K562 (cell line): ENCODE measurements at regions of chr1 and their contacts with region 1.

Region 1: GRCh38 chr1:156833603-156834002 is 17.0 kb upstream of the SH2D2A start:
- DNase-seq: no peak
- ATAC-seq: no peak
- H3K4me3 ChIP-seq: no peak overlapping the region
- H3K27ac ChIP-seq: no peak overlapping the region
- H3K4me1 ChIP-seq: peaks cover 0 to 7% of the 10 kb centered on the region in 2 experiments; a peak in 3 of 5 replicates
- H3K27me3 ChIP-seq: peaks cover 17 to 22% of the 10 kb centered on the region in 2 experiments; a peak in 4 of 5 replicates
- CTCF ChIP-seq: no peak
- EP300 ChIP-seq: no peak
- POLR2A ChIP-seq: no peak
- RAD21 ChIP-seq: no peak

Region 2: DNA sequence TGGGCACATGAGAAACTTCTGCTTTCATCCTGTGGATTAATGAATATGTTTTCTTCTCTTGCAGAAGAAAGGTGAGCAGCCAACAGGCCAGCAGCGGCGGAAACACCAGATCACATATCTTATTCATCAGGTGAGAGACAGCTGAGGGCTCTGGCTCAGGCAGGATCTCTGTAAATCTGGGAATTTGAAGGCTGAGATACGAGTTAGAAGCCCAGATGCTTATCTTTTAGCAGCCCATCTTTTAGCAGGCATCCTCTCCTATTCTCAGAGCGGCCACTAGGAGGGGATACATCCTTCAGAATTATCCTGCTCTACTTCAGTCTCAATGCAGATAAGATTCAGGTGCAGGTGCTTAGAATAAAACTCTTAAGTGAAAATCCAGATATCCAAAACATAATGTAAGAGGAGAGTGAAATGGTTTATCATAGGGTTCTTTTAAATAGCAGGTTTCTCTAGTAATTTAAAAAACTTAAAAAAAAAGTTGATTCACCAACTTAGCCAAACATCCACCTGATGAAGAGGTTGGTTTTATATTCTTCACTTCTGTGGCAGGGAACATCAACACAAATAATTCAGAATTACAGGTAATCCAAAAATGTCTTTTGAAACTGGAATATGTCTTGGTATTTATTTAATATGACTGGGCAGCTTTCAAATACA is 36.3 kb before region 1 on chr1:
- CTCF ChIA-PET with region 1: interaction called, 4 read pairs
- POLR2A ChIA-PET with region 1: no interaction called
- in situ Hi-C with region 1: no loop called
- intact Hi-C with region 1: loop called (anchors 5 kb)
- DNase-seq: peak; percentile 70 to 77 (median 74)
- ATAC-seq: peak; percentile 85
- H3K4me3 ChIP-seq: no peak overlapping the region
- H3K27ac ChIP-seq: no peak overlapping the region
- H3K4me1 ChIP-seq: no peaks in the 10 kb centered on the region
- H3K27me3 ChIP-seq: no peaks in the 10 kb centered on the region
- CTCF ChIP-seq: peak; percentile 70 to 91 (median 85)
- EP300 ChIP-seq: peak; percentile 29
- POLR2A ChIP-seq: no peak
- RAD21 ChIP-seq: peak; percentile 86 to 89